ENCODE measurements at regions of chr9 and their contacts with region 1.

Region 1: DNA sequence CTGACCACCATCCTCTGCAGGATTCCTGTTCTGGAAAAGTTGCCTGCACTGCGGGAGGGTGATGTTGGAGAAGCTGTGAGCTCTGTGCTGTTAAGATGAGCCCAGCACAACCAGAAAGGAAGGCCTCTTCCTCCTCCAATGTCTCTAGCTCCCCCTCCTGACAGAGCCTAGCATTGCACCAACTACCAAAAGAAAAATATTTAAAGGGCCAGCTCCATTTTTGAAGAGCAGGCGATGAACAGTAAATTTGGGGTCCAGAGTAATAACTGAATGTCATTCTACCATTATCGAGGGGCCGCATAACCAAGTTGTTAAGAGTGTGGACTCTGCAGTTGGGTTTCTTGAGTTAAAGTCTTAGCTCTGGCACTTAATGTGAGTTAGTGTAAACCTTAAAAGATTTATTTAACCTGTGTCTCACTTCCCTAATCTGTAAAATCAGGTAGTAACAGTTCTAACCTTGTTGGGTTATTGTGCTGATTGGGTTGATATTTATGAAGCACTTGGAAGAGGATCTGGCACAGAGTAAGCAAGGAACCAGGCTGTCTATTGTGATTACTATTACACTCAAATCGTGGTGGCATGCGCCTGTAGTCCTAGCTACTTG is 3.9 kb downstream of the TEX53 start:
- DNase-seq: peak; percentile 43
- ATAC-seq: peak; percentile 92
- H3K4me3 ChIP-seq: no peak overlapping the region
- H3K27ac ChIP-seq: 0 out of 2 replicates have a peak overlapping the region, but pooled peaks have one; percentile 25
- H3K4me1 ChIP-seq: peaks cover 7% of the 10 kb centered on the region
- H3K27me3 ChIP-seq: no peaks in the 10 kb centered on the region
- CTCF ChIP-seq: peak; percentile 89 to 99 (median 95); a peak in 5 of 6 replicates
- EP300 ChIP-seq: no peak
- POLR2A ChIP-seq: peak; percentile 47; the same call in 1 of the 2 replicates
- RAD21 ChIP-seq: peak; percentile 99

Region 2: DNA sequence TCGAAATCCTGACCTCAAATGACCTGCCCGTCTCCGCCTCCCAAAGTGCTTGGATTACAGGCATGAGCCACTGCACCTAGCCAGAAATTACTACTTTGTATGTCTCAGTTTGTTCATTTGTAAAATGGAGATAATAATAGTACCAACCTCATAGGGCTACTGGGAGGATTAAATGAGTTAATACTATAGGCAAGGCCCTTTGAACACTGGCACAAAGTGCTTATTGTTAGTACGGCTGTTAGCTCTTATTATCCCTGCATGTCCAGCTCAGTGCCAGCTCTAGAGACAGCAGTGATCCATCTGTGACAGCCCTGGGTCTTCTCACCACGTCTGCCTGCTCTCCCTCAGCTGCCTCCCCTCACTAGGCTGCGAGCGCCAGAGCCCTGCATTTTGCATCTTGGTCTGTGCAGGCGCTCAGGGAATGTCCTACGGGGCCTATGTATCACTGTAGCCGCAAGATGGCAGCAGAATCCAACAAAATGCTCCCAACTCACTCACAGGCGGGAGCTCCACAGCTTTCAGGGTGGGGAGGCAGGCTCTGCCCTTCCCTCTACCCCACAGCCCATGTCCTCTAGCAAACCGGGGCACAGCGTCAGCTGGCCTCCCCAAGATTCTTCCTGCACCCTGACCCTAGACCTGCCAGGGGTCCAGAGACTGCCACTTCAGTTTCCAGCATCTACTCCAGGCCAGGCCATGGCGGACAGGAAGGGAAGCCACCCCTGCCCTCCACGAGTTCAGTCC is 248.2 kb before region 1 on chr9:
- CTCF ChIA-PET with region 1: interaction called, 115 read pairs
- POLR2A ChIA-PET with region 1: interaction called, 6 read pairs
- RAD21 ChIA-PET with region 1: interaction called, 69 read pairs
- SMC1A ChIA-PET with region 1: interaction called, 75 read pairs
- in situ Hi-C with region 1: loop called (anchors 5 kb)
- intact Hi-C with region 1: loop called (anchors 1 kb)
- DNase-seq: no peak
- ATAC-seq: peak; percentile 98
- H3K4me3 ChIP-seq: no peak overlapping the region
- H3K27ac ChIP-seq: no peak overlapping the region
- H3K4me1 ChIP-seq: peaks cover 5% of the 10 kb centered on the region; the same call in 1 of the 2 replicates
- H3K27me3 ChIP-seq: no peaks in the 10 kb centered on the region; a peak in 1 of 4 replicates
- CTCF ChIP-seq: peak; percentile 76 to 93 (median 84)
- EP300 ChIP-seq: no peak
- POLR2A ChIP-seq: no peak
- RAD21 ChIP-seq: peak; percentile 91

Region 3: GRCh38 chr9:114497236-114497635 is 156.4 kb before region 1 on chr9:
- CTCF ChIA-PET with region 1: interaction called, 40 read pairs
- POLR2A ChIA-PET with region 1: no interaction called
- RAD21 ChIA-PET with region 1: interaction called, 116 read pairs
- SMC1A ChIA-PET with region 1: interaction called, 56 read pairs
- in situ Hi-C with region 1: no loop called
- intact Hi-C with region 1: no loop called
- DNase-seq: no peak
- ATAC-seq: no peak
- H3K4me3 ChIP-seq: no peak overlapping the region
- H3K27ac ChIP-seq: no peak overlapping the region
- H3K4me1 ChIP-seq: no peaks in the 10 kb centered on the region; the same call in 1 of the 2 replicates
- H3K27me3 ChIP-seq: peaks cover 0 to 6% of the 10 kb centered on the region in 2 experiments; a peak in 2 of 4 replicates
- CTCF ChIP-seq: no peak
- EP300 ChIP-seq: no peak
- POLR2A ChIP-seq: no peak
- RAD21 ChIP-seq: no peak

Region 4: GRCh38 chr9:114529285-114529684 is 124.4 kb before region 1 on chr9:
- CTCF ChIA-PET with region 1: interaction called, 12 read pairs
- POLR2A ChIA-PET with region 1: no interaction called
- RAD21 ChIA-PET with region 1: interaction called, 6 read pairs
- SMC1A ChIA-PET with region 1: interaction called, 4 read pairs
- in situ Hi-C with region 1: no loop called
- intact Hi-C with region 1: no loop called
- DNase-seq: no peak
- ATAC-seq: no peak
- H3K4me3 ChIP-seq: no peak overlapping the region
- H3K27ac ChIP-seq: no peak overlapping the region
- H3K4me1 ChIP-seq: no peaks in the 10 kb centered on the region
- H3K27me3 ChIP-seq: no peaks in the 10 kb centered on the region; a peak in 3 of 4 replicates
- CTCF ChIP-seq: no peak
- EP300 ChIP-seq: no peak
- POLR2A ChIP-seq: no peak
- RAD21 ChIP-seq: no peak

Region 5: DNA sequence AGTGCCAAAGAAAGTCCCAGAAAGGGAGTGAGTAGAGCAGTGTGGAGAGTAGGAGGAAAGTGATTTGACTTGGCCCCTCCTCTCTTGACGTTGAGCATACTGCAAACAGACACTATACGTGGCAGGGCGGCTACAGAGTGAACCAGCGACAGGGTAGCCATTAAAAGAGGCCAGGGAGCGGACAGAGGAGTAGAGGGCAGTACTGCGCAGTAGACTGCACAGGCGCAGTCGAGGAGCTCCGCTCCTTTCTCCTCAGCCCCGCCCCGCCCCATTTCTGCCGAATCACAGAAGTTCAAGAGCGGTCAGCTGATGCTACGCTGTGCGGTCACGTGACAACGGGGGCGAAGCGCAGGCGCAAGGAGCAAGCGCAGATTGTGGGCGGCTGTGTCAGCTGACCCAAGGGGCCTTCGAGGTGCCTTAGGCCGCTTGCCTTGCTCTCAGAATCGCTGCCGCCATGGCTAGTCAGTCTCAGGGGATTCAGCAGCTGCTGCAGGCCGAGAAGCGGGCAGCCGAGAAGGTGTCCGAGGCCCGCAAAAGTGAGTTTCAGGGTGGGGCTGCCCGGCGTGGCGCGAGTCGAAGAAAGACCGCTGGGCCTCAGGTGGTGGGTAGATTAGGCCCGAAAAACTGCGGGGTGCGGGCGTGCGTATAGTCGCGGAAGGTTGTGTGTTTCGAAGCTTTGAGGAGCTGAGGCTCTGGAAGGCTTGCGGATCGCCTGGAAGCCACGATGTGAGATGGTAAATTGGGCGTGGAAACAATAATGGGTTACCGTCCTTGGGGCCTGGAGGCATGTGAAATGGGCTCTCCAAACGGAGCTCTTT is 66.1 kb before region 1 on chr9 and contains the start of gene ATP6V1G1:
- CTCF ChIA-PET with region 1: interaction called, 277 read pairs
- POLR2A ChIA-PET with region 1: interaction called, 10 read pairs
- RAD21 ChIA-PET with region 1: interaction called, 187 read pairs
- SMC1A ChIA-PET with region 1: interaction called, 189 read pairs
- in situ Hi-C with region 1: loop called (anchors 5 kb)
- intact Hi-C with region 1: loop called (anchors 1 kb)
- DNase-seq: peak; percentile 96
- ATAC-seq: peak; percentile 95
- H3K4me3 ChIP-seq: peak within 1 kb of the TSS; percentile 98
- H3K27ac ChIP-seq: peak within 1 kb of the TSS; percentile 78
- H3K4me1 ChIP-seq: no peaks in the 10 kb centered on the region; the same call in 1 of the 2 replicates
- H3K27me3 ChIP-seq: no peaks in the 10 kb centered on the region
- CTCF ChIP-seq: peak in 1 of 3 experiments; percentile 17; a peak in 1 of 6 replicates
- EP300 ChIP-seq: peak; percentile 9 to 49; a peak in 1 of 4 replicates
- POLR2A ChIP-seq: peak; percentile 98
- RAD21 ChIP-seq: no peak
- polyA plus RNA-seq, gene ATP6V1G1: 162 to 204 TPM

Region 6: GRCh38 chr9:114616653-114617520 is 36.8 kb before region 1 on chr9:
- CTCF ChIA-PET with region 1: interaction called, 74 read pairs
- POLR2A ChIA-PET with region 1: interaction called, 9 read pairs
- RAD21 ChIA-PET with region 1: interaction called, 20 read pairs
- SMC1A ChIA-PET with region 1: interaction called, 28 read pairs
- in situ Hi-C with region 1: no loop called
- intact Hi-C with region 1: loop called (anchors 5 kb)
- DNase-seq: peak; percentile 72
- ATAC-seq: peak; percentile 65
- H3K4me3 ChIP-seq: peak overlapping the region; percentile 62
- H3K27ac ChIP-seq: peak overlapping the region; percentile 96
- H3K4me1 ChIP-seq: peaks cover 66% of the 10 kb centered on the region
- H3K27me3 ChIP-seq: no peaks in the 10 kb centered on the region
- CTCF ChIP-seq: no peak
- EP300 ChIP-seq: 0 out of 4 replicates have a peak, but pooled peaks of 1 of the 2 experiments have one; percentile 44
- POLR2A ChIP-seq: no peak
- RAD21 ChIP-seq: no peak

Region 7: GRCh38 chr9:114706711-114707110 is 53.1 kb after region 1 on chr9:
- CTCF ChIA-PET with region 1: no interaction called
- POLR2A ChIA-PET with region 1: no interaction called
- RAD21 ChIA-PET with region 1: no interaction called
- SMC1A ChIA-PET with region 1: no interaction called
- in situ Hi-C with region 1: no loop called
- intact Hi-C with region 1: no loop called
- DNase-seq: no peak
- ATAC-seq: no peak
- H3K4me3 ChIP-seq: no peak overlapping the region
- H3K27ac ChIP-seq: no peak overlapping the region
- H3K4me1 ChIP-seq: no peaks in the 10 kb centered on the region
- H3K27me3 ChIP-seq: peaks cover 0 to 13% of the 10 kb centered on the region in 2 experiments; a peak in 2 of 4 replicates
- CTCF ChIP-seq: no peak
- EP300 ChIP-seq: no peak
- POLR2A ChIP-seq: no peak
- RAD21 ChIP-seq: no peak